MCF 10A (cell line): ENCODE measurements at regions of chr20 and their contacts with region 1.

Region 1: DNA sequence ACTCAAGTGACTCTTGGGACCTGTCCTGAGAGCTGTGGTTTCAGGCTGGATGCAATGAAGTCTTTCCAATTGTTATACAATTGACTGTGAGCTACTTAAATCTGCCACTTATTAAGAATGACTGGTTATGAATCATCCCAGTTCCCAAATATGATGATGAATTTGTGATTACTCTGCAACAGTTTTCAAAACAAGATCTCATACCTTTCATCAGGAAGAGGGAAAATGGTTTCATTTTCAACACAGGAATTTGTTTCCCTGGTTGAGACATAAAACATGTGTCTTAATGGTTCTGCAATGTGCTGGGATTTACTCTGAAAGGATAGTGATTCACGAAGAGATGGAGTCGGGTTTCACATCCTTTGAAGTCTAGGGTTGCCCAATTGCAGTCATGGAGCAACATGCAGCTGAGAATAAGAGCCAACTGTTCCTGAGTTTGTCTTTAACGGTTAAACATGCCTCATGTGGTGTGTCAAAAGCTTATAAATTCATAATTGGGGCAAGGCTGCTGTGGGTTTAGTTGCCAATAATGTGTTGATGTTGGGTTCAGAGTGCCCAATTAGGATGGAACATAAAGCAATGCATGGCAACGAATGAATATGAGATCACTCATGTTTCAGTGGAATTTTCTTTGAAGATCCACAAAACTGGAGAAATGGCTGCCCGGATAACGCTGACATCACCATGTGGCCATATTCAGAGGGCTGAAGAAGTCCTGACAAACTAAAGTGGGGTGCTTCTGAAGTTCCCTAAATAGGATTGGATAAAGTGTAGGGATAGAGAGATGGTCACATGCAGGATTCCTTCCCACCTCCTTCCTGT is 41.0 kb downstream of the CYP24A1 start:
- DNase-seq: peak; percentile 99
- H3K4me3 Mint-ChIP-seq: no peak overlapping the region
- H3K27ac Mint-ChIP-seq: no peak overlapping the region
- H3K4me1 Mint-ChIP-seq: peaks cover 8% of the 10 kb centered on the region
- H3K27me3 Mint-ChIP-seq: no peaks in the 10 kb centered on the region
- CTCF ChIP-seq: no peak

Region 2: GRCh38 chr20:53738039-53738944 is 394.5 kb before region 1 on chr20:
- CTCF ChIA-PET with region 1: no interaction called
- POLR2A ChIA-PET with region 1: no interaction called
- intact Hi-C with region 1: no loop called
- DNase-seq: no peak
- H3K4me3 Mint-ChIP-seq: no peak overlapping the region
- H3K27ac Mint-ChIP-seq: no peak overlapping the region
- H3K4me1 Mint-ChIP-seq: peaks cover 32% of the 10 kb centered on the region
- H3K27me3 Mint-ChIP-seq: no peaks in the 10 kb centered on the region
- CTCF ChIP-seq: no peak

Region 3: GRCh38 chr20:54148947-54149503 is 16.2 kb after region 1 on chr20:
- CTCF ChIA-PET with region 1: interaction called, 5 read pairs
- POLR2A ChIA-PET with region 1: interaction called, 14 read pairs
- intact Hi-C with region 1: no loop called
- DNase-seq: peak; percentile 35
- H3K4me3 Mint-ChIP-seq: no peak overlapping the region
- H3K27ac Mint-ChIP-seq: no peak overlapping the region
- H3K4me1 Mint-ChIP-seq: peaks cover 6% of the 10 kb centered on the region
- H3K27me3 Mint-ChIP-seq: no peaks in the 10 kb centered on the region
- CTCF ChIP-seq: no peak

Region 4: GRCh38 chr20:54173653-54174456 is 41.0 kb after region 1 on chr20 and contains the start of gene CYP24A1:
- CTCF ChIA-PET with region 1: interaction called, 4 read pairs
- POLR2A ChIA-PET with region 1: interaction called, 78 read pairs
- intact Hi-C with region 1: no loop called
- DNase-seq: peak; percentile 41
- H3K4me3 Mint-ChIP-seq: peak within 1 kb of the TSS; percentile 67
- H3K27ac Mint-ChIP-seq: no peak within 1 kb of the TSS
- H3K4me1 Mint-ChIP-seq: peaks cover 20% of the 10 kb centered on the region
- H3K27me3 Mint-ChIP-seq: no peaks in the 10 kb centered on the region
- CTCF ChIP-seq: no peak
- total RNA-seq, gene CYP24A1: 0.28 and 0.34 TPM in 2 replicates

Region 5: DNA sequence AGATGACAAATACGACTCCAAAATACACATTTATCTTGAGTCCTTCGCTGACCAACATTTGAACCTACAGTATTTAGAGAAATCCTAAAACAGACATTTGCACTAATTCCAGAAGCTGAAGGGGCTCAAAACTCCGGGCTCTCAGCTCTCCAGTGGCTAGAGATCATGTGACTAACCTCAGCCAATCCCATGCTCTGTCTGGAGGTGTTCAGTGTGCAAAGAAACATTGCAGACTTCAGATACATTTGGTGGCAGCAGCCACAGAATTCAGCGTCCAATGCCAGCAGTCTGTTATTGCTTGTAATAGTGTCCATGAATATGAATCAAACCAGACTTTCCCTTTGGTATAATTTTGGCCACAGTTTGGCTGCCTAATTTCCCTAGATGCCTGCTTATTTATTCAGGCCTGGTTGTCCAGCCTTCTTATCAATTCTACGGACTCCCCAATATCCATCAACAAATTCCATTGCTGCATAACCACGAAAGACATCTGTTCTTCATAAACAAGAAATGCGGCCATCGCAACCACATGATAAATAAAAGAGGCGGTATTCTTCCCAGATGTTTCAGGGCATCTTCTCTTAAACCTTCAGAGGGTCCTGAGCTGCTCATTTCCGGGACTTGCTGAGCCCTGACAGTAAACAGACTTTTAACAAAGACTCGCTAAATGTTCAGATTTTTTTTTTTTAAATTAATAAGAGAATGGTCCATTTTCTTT is 55.5 kb after region 1 on chr20:
- CTCF ChIA-PET with region 1: interaction called, 14 read pairs
- POLR2A ChIA-PET with region 1: interaction called, 78 read pairs
- intact Hi-C with region 1: no loop called
- DNase-seq: no peak
- H3K4me3 Mint-ChIP-seq: no peak overlapping the region
- H3K27ac Mint-ChIP-seq: no peak overlapping the region
- H3K4me1 Mint-ChIP-seq: peaks cover 24% of the 10 kb centered on the region
- H3K27me3 Mint-ChIP-seq: no peaks in the 10 kb centered on the region
- CTCF ChIP-seq: no peak